ENCODE measurements at regions of chr1 and their contacts with region 1.

Region 1: GRCh38 chr1:182143154-182143657 is 81.7 kb upstream of the ZNF648 start:
- DNase-seq: peak; percentile 69
- ATAC-seq: peak; percentile 90
- H3K4me3 ChIP-seq: no peak overlapping the region
- H3K27ac ChIP-seq: no peak overlapping the region
- H3K4me1 ChIP-seq: 0 out of 2 replicates have a peak, but pooled peaks cover 2% of the 10 kb centered on the region
- H3K27me3 ChIP-seq: no peaks in the 10 kb centered on the region; the same call in 1 of the 2 replicates
- CTCF ChIP-seq: peak; percentile 87
- POLR2A ChIP-seq: no peak
- RAD21 ChIP-seq: peak; percentile 77

Region 2: DNA sequence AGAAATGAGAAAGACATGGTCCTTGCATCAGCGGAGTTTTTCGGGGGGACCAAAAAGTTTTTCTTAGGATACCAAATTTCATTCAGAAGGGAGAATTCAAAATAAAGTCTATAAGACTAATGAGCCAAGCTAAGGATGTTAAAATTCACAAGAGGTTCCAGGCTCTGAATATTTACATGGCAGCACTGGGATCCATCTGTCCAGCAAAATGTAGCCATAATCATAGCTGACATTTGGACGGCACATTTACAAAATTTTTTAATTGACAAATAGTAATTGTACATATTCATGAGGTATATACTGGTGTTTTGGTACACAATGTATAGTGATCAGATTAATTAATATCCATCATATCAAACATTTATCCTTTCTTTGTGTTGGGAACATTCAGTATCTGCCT is 189.6 kb before region 1 on chr1:
- CTCF ChIA-PET with region 1: no interaction called
- POLR2A ChIA-PET with region 1: no interaction called
- dilution Hi-C with region 1: no loop called
- in situ Hi-C with region 1: no loop called
- intact Hi-C with region 1: no loop called
- DNase-seq: no peak
- ATAC-seq: no peak
- H3K4me3 ChIP-seq: no peak overlapping the region
- H3K27ac ChIP-seq: no peak overlapping the region
- H3K4me1 ChIP-seq: no peaks in the 10 kb centered on the region
- H3K27me3 ChIP-seq: no peaks in the 10 kb centered on the region
- CTCF ChIP-seq: no peak
- POLR2A ChIP-seq: no peak
- RAD21 ChIP-seq: no peak

Region 3: DNA sequence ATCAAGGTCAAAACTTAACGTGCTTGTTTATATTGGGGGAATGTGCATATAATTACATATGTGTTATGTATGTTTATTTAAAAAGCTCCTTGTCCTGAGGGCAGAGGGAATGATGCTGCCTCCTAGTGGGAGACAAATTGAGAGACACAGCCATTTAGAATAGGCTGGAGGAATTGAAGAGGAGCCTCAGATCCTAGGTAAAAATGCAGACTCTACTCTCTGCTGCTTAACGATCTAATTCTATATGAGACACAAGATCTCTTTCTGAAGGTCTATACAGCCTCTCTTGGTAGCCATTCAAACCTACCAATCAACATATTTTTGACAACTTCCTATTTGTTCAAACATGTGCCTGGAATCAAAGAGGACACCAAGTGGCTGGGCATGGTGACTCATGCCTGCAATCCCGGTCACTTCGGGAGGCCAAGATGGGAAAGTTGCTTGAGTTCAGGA is 54.9 kb after region 1 on chr1:
- CTCF ChIA-PET with region 1: interaction called, 11 read pairs
- POLR2A ChIA-PET with region 1: no interaction called
- dilution Hi-C with region 1: no loop called
- in situ Hi-C with region 1: no loop called
- intact Hi-C with region 1: no loop called
- DNase-seq: no peak
- ATAC-seq: no peak
- H3K4me3 ChIP-seq: no peak overlapping the region
- H3K27ac ChIP-seq: no peak overlapping the region
- H3K4me1 ChIP-seq: no peaks in the 10 kb centered on the region
- H3K27me3 ChIP-seq: no peaks in the 10 kb centered on the region
- CTCF ChIP-seq: no peak
- POLR2A ChIP-seq: no peak
- RAD21 ChIP-seq: no peak

Region 4: DNA sequence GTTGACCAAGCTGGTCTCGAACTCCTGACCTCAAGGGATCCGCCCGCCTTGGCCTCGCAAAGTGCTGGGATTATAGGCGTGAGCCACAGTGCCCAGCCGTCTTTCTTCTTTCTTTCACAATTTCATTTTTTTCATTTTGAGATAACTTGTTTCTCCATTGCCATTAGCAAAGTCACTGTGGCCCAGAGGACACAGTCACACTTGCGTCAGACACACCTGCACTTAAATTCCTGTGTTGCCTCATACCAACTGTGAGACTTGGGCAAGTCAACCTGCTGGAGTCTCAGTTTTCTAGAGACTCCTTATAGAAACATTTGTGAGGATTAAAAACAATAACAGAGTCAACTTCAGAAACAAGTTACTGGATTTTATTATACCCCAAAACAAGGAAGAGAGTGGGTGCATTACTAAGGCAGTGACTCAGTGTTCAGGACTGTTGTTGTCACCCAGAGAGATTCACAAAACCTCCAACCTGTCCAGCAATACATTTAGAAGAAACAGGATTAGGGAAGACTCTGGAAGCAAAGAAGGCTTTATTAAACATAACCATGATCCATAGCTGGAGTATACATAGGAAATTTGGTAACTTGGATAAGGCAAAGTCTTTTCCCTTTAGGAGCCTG is 254.7 kb after region 1 on chr1:
- CTCF ChIA-PET with region 1: interaction called, 81 read pairs
- POLR2A ChIA-PET with region 1: interaction called, 3 read pairs
- dilution Hi-C with region 1: no loop called
- in situ Hi-C with region 1: loop called (anchors 5 kb)
- intact Hi-C with region 1: loop called (anchors 1 kb)
- DNase-seq: peak; percentile 33
- ATAC-seq: no peak; the same call in 1 of the 2 replicates
- H3K4me3 ChIP-seq: no peak overlapping the region
- H3K27ac ChIP-seq: no peak overlapping the region
- H3K4me1 ChIP-seq: no peaks in the 10 kb centered on the region; the same call in none of the 2 replicates
- H3K27me3 ChIP-seq: no peaks in the 10 kb centered on the region
- CTCF ChIP-seq: no peak
- POLR2A ChIP-seq: no peak
- RAD21 ChIP-seq: no peak